ENCODE measurements at regions of chr7 and their contacts with region 1.

Region 1: GRCh38 chr7:127158659-127159058 is 94.1 kb downstream of the GRM8 start:
- DNase-seq: peak; percentile 16
- CTCF ChIP-seq: peak; percentile 52

Region 2: GRCh38 chr7:127119517-127119916 is 39.1 kb before region 1 on chr7:
- CTCF ChIA-PET with region 1: no interaction called
- POLR2A ChIA-PET with region 1: no interaction called
- DNase-seq: no peak
- CTCF ChIP-seq: no peak

Region 3: DNA sequence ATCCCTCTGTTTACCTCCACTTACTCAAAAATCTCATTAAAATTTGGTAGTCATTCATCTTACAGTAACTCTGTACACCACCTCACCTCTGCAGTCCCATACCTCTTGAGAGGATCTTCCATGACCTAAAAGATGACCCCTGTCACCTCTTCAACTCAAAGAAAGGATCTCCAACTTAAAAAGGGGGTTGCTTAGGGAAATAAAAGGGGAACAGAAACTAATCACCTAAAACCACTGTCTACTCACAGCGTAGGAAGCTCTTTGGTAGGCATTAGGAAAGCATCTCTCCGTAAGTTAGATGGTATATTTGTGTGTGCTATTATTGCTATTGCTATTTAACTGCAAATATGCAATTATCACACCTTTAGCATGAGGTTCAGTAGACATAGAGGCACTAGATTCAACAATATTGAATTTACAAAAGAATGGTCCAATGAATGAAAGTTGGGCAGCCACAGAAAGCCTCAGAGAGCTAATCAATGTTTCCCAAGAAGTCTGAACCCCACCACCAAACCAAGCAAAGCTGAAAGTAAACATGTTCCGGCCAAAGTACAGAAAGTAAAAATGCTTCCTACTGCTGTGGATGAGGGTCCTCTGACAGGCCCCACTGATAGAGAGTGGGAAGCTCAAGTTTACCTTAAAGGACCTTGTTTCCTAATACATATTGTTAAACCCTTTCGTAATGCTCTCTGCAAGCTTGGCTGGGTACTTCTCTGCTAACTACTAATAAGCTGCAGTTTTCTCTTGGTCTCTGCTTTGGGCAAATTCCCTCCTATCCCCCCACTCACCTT is 11.7 kb before region 1 on chr7:
- CTCF ChIA-PET with region 1: interaction called, 10 read pairs
- POLR2A ChIA-PET with region 1: no interaction called
- DNase-seq: no peak
- CTCF ChIP-seq: no peak

Region 4: DNA sequence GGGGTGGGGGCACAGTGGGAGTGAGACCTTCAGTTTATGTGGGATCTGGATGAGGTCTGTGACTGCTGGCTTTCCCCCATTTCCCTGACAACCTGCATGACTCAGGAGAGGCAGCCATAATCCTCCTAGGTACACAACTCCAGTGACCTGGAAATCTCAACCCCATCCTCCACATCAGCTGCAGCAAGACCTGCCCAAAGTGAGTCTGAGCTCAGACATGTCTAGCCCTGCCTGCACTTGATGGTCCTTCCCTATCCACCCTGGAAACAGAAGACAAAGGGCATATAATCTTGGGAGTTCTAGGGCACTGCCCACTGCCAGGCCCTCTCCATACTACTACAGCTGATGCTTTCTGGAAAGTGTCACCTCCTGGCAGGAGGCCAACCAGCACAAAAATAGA is 18.5 kb after region 1 on chr7:
- CTCF ChIA-PET with region 1: no interaction called
- POLR2A ChIA-PET with region 1: no interaction called
- DNase-seq: no peak
- CTCF ChIP-seq: no peak

Region 5: DNA sequence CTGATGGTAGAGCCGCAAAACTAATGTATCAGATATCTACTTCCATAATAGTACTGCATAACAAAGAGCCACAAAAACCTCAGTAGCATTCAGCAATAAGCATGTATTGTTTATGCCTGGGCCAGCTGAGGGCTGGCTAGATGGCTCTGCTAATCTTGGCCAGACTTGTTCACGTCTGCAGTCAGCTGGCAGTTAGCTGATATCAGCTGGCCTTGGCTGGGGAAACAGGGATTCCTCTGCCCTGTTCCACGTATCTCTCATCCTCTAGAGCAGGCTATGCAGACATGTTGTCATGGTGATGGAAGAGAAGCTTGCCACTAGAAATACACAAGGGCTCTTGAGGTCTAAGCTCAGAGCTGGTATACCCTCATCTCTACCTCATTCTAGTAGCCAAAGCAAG is 31.2 kb after region 1 on chr7:
- CTCF ChIA-PET with region 1: no interaction called
- POLR2A ChIA-PET with region 1: no interaction called
- DNase-seq: no peak
- CTCF ChIP-seq: no peak

Region 6: GRCh38 chr7:127253281-127254162 is 94.9 kb after region 1 on chr7:
- CTCF ChIA-PET with region 1: no interaction called
- POLR2A ChIA-PET with region 1: no interaction called
- DNase-seq: peak; percentile 77
- CTCF ChIP-seq: peak; percentile 93